Left ventricle myocardium superior (tissue), 1 donor: ENCODE measurements at regions of chr22 and their contacts with region 1.

Region 1: DNA sequence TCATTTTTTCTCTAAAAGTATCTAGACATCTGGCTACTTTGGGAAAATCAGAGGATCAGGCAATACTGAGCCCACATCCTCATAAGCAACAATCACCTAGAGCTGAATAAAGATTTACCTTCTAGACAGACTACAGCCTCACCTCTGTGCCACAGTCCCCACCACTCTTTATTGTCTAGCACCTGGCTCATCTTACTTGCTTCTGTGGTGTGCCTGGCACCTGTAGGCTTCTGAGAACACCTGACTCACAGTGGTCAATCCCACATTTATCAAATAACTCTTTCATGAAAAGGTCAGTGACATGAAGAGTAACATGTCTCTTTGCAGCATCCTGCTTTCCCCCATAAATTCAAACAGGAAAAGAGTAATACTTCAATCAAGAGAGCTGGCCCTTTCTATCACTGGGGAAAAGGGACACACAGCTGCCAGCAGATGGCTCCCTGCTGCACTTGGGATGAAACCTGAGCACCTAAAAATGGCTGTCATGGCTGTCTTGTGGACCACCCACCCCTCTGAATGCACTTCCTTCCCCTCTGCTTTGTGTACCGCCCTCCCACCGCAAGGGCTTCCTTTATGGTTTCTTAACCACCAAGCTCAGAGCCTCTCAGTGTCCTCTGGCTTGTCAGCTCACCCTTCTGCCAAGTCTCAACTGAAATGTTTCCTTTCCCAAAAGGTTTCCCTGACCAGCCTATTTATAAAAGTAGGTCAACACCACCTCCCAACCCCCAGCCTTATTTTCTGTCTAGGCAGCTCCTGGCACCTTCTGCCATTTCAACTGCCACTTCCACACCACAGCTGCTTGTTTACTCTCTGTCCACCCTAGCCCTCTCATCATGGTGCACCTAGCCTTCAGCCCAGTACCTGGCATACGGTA is 9.3 kb downstream of the TFIP11 start:
- DNase-seq: peak; percentile 44
- ATAC-seq: peak; percentile 95

Region 2: DNA sequence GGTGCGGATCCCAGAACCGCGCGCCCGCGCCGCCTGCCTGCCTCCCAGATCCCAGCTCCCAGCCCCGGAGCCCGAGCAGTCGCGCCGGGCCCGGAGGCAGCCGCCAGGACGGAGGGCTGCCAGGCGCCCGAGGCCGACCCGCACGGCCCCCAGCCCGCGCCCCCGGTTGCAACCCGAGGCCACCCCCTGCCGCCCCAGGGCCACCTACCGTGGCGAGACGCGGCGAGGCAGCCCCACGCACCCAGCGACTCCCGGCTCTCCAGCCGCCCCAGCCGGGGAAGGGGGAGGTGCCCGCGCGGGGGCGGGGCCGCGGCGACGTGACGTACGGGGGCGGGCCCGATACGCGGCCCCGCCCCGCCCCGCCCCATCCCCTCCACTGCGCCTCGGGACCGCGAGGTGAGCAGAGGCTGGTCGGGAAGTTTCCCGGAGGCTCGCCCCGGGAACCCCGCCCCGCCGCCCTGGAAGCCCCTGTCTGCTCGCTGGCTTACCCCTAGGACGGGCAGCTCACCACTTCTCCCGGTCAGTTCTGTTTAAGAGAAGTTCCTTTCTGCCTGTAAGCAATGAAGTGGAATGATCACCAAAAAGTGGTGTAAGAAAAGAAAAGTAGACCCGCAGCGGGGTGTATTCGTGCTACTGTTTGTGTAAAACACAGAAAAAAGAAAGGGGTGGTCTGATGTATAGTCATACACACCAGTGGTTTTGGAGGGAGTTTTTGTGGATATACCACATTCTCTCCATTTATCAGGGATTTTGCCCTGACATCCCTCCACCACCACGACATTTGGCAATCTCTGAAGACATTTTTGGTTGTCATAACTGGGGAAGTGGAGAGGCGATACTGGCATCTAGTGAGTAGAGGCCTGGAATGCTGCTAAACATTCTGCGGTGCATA is 87.2 kb after region 1 on chr22 and contains the start of gene TPST2:
- intact Hi-C with region 1: loop called (anchors 10 kb)
- DNase-seq: peak; percentile 91
- ATAC-seq: peak; percentile 95
- total RNA-seq, gene TPST2: 27.1 TPM